K562 (cell line): ENCODE measurements at regions of chr12 and their contacts with region 1.

Region 1: DNA sequence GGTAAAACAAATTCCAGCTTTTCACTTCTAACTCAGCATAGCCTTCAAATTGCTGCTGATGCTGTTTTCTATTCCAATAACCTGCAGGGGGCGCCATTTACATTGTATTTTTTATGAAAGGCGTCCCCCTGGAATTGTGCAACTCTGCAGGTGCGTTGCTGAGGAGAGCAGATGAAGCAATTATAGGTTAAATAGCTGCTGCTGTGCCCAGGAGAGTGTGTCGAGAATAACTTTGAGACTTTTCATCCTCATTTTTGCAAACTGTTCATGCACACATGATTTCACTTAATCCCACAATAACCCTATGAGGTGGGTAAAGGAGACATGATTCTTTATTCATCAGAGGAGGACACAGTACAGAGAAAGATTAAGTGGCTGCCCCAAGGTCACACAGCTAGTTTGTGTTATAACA is 75.7 kb downstream of the MYRFL start:
- DNase-seq: peak; percentile 35 to 81 (median 37)
- ATAC-seq: peak; percentile 83
- H3K4me3 ChIP-seq: no peak overlapping the region
- H3K27ac ChIP-seq: no peak overlapping the region
- H3K4me1 ChIP-seq: no peaks in the 10 kb centered on the region
- H3K27me3 ChIP-seq: peaks cover 0 to 4% of the 10 kb centered on the region in 2 experiments; a peak in 1 of 5 replicates
- CTCF ChIP-seq: peak; percentile 55 to 79 (median 68)
- EP300 ChIP-seq: no peak
- POLR2A ChIP-seq: no peak
- RAD21 ChIP-seq: peak; percentile 88 to 91

Region 2: DNA sequence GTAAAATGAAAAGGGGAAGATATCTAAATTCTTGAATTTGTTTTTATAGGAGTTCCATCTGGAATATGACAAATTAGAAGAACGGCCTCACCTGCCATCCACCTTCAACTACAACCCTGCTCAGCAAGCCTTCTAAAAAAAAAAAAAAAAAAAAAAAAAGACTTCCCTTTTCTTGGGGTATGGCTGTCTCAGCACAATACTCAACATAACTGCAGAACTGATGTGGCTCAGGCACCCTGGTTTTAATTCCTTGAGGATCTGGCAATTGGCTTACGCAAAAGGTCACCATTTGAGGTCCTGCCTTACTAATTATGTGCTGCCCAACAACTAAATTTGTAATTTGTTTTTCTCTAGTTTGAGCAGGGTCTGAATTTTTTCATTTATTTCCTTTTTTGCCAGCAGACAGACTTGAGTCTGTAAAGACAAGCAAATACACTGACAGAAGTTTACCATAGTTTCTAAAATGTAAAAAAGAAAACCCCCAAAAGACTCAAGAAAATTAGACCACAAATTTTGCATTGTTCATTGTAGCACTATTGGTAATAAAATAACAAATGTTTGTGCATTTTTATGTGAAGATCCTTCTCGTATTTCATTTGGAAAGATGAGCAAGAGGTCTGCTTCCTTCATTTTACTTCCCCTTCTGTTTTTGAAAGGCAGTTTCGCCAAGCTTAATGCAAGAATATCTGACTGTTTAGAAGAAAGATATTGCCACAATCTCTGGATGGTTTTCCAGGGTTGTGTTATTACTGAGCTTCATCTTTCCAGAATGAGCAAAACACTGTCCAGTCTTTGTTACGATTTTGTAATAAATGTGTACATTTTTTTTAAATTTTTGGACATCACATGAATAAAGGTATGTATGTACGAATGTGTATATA is 453.3 kb after region 1 on chr12:
- CTCF ChIA-PET with region 1: no interaction called
- POLR2A ChIA-PET with region 1: no interaction called
- in situ Hi-C with region 1: no loop called
- intact Hi-C with region 1: loop called (anchors 10 kb)
- DNase-seq: no peak
- ATAC-seq: no peak
- H3K4me3 ChIP-seq: no peak overlapping the region
- H3K27ac ChIP-seq: no peak overlapping the region
- H3K4me1 ChIP-seq: no peaks in the 10 kb centered on the region
- H3K27me3 ChIP-seq: no peaks in the 10 kb centered on the region
- CTCF ChIP-seq: no peak
- EP300 ChIP-seq: no peak
- POLR2A ChIP-seq: no peak
- RAD21 ChIP-seq: no peak

Region 3: GRCh38 chr12:70719672-70720420 is 819.1 kb after region 1 on chr12:
- CTCF ChIA-PET with region 1: interaction called, 3 read pairs
- POLR2A ChIA-PET with region 1: no interaction called
- in situ Hi-C with region 1: loop called (anchors 10 kb)
- intact Hi-C with region 1: loop called (anchors 5 kb)
- DNase-seq: peak; percentile 37 to 57 (median 42)
- ATAC-seq: peak; percentile 89
- H3K4me3 ChIP-seq: no peak overlapping the region
- H3K27ac ChIP-seq: no peak overlapping the region
- H3K4me1 ChIP-seq: no peaks in the 10 kb centered on the region; a peak in 1 of 5 replicates
- H3K27me3 ChIP-seq: no peaks in the 10 kb centered on the region
- CTCF ChIP-seq: peak; percentile 90 to 94 (median 91)
- EP300 ChIP-seq: no peak
- POLR2A ChIP-seq: no peak
- RAD21 ChIP-seq: peak; percentile 97 to 99